ENCODE measurements at regions of chr5 and their contacts with region 1.

Region 1: DNA sequence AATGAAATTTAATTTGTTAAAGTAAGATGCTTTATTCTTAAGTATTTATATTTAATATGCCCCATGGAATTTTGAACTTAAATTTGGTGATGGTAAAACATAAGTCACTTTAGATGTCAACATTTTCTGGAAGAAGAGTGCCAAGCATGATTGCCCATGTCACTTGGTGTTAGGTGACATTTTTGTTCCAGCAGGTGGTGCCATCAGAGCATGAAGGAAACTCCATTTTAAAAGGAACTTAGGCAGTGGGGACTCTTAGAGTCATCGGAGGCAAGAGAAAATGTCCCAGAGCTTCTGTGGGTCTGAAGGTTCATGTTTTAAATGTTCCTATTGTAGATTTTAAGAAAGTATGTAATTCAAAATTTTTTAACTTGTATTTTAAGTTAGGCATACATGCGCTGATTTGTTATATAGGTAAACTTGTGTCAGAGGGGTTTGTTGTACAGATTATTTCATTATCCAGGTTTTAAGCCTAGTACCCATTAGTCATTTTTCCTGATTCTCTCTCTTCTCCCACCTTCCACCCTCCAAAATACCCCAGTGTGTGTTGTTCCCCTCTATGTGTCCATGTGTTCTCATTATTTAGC is 789.3 kb downstream of the SEMA5A start:
- DNase-seq: peak; percentile 10
- H3K4me3 ChIP-seq: no peak overlapping the region
- H3K27me3 ChIP-seq: no peaks in the 10 kb centered on the region
- CTCF ChIP-seq: peak; percentile 66

Region 2: DNA sequence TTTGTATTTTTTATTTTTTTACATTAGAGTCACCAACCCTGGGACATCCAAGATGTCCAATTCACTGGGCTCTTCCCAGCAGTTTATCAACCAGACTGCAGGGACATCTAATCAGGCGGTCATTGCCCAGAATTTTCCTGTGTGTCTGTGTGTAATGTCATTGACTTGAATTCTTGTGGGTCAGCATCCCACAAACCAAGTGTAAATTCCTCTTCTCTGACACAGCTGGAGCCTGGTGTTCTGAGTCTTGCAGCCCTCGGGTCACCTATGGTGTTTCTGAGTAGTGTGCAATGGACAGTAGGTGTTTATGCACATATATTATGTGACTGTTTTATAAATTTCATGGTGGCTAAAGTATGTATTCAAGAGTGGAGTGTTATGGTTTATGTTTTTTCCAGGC is 26.4 kb before region 1 on chr5:
- CTCF ChIA-PET with region 1: no interaction called
- POLR2A ChIA-PET with region 1: no interaction called
- DNase-seq: peak; percentile 28
- H3K4me3 ChIP-seq: no peak overlapping the region
- H3K27me3 ChIP-seq: no peaks in the 10 kb centered on the region
- CTCF ChIP-seq: no peak

Region 3: GRCh38 chr5:8842971-8843551 is 86.5 kb after region 1 on chr5:
- CTCF ChIA-PET with region 1: interaction called, 23 read pairs
- POLR2A ChIA-PET with region 1: no interaction called
- DNase-seq: peak; percentile 34
- H3K4me3 ChIP-seq: no peak overlapping the region
- H3K27me3 ChIP-seq: no peaks in the 10 kb centered on the region
- CTCF ChIP-seq: peak; percentile 78

Measured in BJ (cell line).